CD4-positive, alpha-beta memory T cell (primary cell): ENCODE measurements at regions of chr4 and their contacts with region 1.

Region 1: DNA sequence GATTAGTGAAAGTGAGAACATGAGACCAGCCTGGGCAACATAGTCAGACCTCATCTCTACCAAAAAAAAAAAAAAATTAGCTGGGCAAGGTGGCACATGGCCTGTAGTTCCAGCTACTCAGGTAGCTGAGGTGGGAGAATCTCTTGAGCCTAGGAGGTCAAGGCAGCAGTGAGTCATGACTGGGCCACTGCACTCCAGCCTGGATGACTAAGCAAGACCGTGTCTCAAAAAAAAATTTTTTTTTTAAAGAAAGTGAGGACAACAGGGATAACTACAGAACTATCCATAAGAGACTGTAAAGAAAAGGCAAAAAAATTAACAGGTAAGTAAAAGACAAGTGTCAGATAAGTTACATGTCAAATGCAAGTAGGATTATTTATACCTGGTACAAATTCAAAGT is 13.5 kb upstream of the SPP1 start:
- DNase-seq: no peak
- H3K4me3 ChIP-seq: no peak overlapping the region
- H3K4me3 Mint-ChIP-seq: no peak overlapping the region
- H3K27ac ChIP-seq: no peak overlapping the region
- H3K27ac Mint-ChIP-seq: no peak overlapping the region
- H3K4me1 ChIP-seq: no peaks in the 10 kb centered on the region
- H3K4me1 Mint-ChIP-seq: no peaks in the 10 kb centered on the region
- H3K27me3 ChIP-seq: no peaks in the 10 kb centered on the region
- H3K27me3 Mint-ChIP-seq: peaks cover 0 to 1% of the 10 kb centered on the region in 2 donors

Region 2: DNA sequence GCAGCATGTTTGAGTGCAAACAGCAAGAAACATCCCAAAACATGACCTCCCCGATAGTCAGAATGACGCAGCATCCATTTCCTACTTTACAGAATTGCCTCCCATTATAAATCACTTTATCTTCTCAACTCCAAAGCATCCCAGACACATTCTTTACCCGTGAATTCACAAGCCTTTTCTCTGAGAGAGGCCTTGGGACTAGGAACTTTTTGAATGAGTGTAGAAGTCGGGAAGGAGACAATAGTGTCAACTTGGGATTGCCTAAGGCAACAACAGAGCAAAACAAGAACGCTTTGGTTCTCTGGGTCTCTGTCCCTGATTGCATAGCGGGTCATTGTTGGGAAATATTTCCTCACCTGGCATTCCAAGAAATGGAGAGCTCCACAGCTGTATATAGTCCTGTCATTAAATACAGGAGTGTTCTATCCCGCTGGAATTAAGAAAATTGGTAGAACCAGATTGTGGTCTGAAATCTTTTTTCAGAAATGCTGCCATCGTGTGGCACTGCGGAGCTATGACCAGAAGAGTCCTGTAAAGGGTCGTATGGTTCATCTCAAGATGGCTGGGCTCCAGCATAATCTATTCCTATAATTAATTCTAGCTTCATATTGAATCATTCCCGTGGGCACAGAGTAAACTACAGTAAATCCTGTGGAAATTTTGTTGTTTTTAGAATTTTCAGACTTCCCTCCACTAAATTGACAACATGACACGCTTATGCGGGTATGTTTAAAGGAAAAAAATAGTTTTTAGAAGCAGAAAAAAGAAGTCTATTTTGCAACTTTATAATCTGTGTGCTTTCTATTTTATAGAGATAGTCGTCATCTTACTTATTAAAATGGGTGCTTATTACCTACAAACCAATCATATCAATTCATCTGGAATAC is 11.5 kb after region 1 on chr4:
- CTCF ChIA-PET with region 1: interaction called, 18 read pairs
- POLR2A ChIA-PET with region 1: no interaction called
- intact Hi-C with region 1: no loop called
- DNase-seq: peak in 4 of 5 donors; percentile 9 to 22 (median 16)
- H3K4me3 ChIP-seq: no peak overlapping the region
- H3K4me3 Mint-ChIP-seq: no peak overlapping the region
- H3K27ac ChIP-seq: no peak overlapping the region
- H3K27ac Mint-ChIP-seq: no peak overlapping the region
- H3K4me1 ChIP-seq: peaks cover 7% of the 10 kb centered on the region
- H3K4me1 Mint-ChIP-seq: peaks cover 6 to 11% (median 7%) of the 10 kb centered on the region in 4 donors
- H3K27me3 ChIP-seq: peaks cover 5% of the 10 kb centered on the region
- H3K27me3 Mint-ChIP-seq: peaks cover 20 to 28% of the 10 kb centered on the region in 2 donors